GM12878 (cell line): ENCODE measurements at regions of chr14 and their contacts with region 1.

Region 1: DNA sequence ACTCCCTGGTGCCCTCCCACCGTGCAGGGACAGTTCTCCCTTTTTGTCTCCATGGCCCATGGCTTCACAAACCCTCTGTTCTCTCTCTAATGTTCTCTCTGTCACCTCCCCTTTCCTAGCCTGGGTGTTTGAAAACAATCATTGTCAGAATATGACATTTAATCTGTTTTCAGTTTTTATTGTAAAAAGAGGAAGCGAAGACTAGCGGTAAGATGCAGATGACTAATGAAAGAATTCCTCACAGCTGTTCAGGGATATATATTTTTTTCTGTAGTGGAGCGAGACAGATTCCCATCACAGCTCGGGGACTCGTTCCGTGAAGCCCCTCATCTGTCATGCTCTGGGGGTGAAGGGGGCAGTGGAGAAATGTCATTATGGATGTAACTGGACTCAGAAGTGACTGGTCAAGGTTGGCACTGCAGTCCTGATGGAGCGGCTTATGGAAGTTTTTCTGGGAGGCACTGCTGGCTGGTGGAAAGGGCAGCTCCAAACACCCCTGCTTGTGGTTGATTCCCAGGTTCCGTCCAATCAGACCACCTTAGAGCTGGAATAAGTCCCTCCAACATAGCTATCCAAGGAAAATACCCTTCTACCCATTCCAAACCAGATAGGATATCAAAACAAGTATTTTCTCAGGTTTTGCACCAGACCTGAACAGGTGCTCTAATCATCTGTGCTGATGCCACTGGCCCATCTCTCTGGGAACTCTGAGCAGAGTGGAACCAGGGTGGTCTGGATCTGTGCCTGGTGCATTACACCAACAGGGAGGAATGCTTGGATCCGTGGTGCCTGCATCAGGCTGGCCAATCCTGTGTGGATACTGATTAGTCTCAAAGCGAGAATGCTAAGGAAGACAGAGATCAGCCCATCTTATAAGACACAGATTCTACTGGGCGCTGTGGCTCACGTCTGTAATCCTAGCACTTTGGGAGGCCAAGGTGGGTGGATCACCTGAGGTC is 84.7 kb downstream of the GPATCH2L start:
- DNase-seq: peak; percentile 63
- ATAC-seq: peak; percentile 96
- H3K4me3 ChIP-seq: no peak overlapping the region
- H3K27ac ChIP-seq: peak overlapping the region; percentile 7; the same call in 1 of the 2 replicates
- H3K4me1 ChIP-seq: peaks cover 16% of the 10 kb centered on the region
- H3K27me3 ChIP-seq: no peaks in the 10 kb centered on the region
- CTCF ChIP-seq: no peak
- EP300 ChIP-seq: peak; percentile 61 to 79; a peak in 3 of 4 replicates
- POLR2A ChIP-seq: no peak
- RAD21 ChIP-seq: no peak

Region 2: GRCh38 chr14:76191297-76191696 is 45.2 kb before region 1 on chr14:
- CTCF ChIA-PET with region 1: no interaction called
- POLR2A ChIA-PET with region 1: no interaction called
- RAD21 ChIA-PET with region 1: interaction called, 14 read pairs
- SMC1A ChIA-PET with region 1: interaction called, 12 read pairs
- in situ Hi-C with region 1: no loop called
- intact Hi-C with region 1: no loop called
- DNase-seq: no peak
- ATAC-seq: peak; percentile 48
- H3K4me3 ChIP-seq: no peak overlapping the region
- H3K27ac ChIP-seq: peak overlapping the region; percentile 99
- H3K4me1 ChIP-seq: peaks cover 48% of the 10 kb centered on the region
- H3K27me3 ChIP-seq: no peaks in the 10 kb centered on the region
- CTCF ChIP-seq: no peak
- EP300 ChIP-seq: no peak
- POLR2A ChIP-seq: no peak
- RAD21 ChIP-seq: no peak